Caco-2 (cell line): ENCODE measurements at regions of chr1 and their contacts with region 1.

Region 1: DNA sequence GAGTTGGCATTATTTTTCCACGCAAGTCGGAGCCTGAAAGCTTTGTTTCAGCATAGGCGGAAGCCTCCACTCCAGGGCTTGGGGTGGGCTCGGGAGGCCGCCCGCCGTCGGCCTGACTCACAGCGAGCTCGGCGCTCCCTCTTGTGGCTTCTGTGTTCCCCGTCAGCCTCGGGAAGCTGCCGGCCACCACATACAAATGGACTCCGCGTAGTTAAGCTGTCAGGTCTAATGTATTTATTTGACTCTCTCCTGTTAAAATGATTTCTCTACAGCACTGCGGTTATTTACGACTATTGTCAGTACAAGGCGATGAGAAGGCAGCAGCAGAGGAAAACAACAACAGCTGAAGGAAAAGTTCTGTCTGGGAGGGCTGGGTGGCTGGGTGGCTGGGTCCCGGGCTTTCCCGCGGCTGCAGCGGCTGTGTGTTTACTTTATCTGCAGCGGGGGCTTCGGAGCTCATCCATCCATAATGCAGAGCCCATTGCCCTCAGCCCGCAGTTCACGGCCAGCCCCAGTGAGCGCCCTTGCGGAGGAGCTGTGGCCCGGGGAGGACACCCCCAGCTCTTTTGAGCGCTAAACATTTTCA is 375.7 kb upstream of the CAMK1G start:
- DNase-seq: peak; percentile 59 to 66
- H3K4me3 ChIP-seq: peak overlapping the region; percentile 10; the same call in 1 of the 2 replicates
- H3K4me3 Mint-ChIP-seq: peak overlapping the region; percentile 62
- H3K27ac Mint-ChIP-seq: no peak overlapping the region
- H3K4me1 ChIP-seq: no peaks in the 10 kb centered on the region
- H3K4me1 Mint-ChIP-seq: no peaks in the 10 kb centered on the region
- H3K27me3 ChIP-seq: peaks cover 1% of the 10 kb centered on the region
- H3K27me3 Mint-ChIP-seq: peaks cover 14% of the 10 kb centered on the region
- CTCF ChIP-seq: peak; percentile 55 to 91

Region 2: GRCh38 chr1:209076688-209077087 is 131.1 kb before region 1 on chr1:
- CTCF ChIA-PET with region 1: interaction called, 7 read pairs
- POLR2A ChIA-PET with region 1: no interaction called
- intact Hi-C with region 1: loop called (anchors 1 kb)
- DNase-seq: peak in 1 of 2 experiments; percentile 12
- H3K4me3 ChIP-seq: no peak overlapping the region
- H3K4me3 Mint-ChIP-seq: no peak overlapping the region
- H3K27ac Mint-ChIP-seq: no peak overlapping the region
- H3K4me1 ChIP-seq: no peaks in the 10 kb centered on the region
- H3K4me1 Mint-ChIP-seq: peaks cover 9% of the 10 kb centered on the region
- H3K27me3 ChIP-seq: no peaks in the 10 kb centered on the region
- H3K27me3 Mint-ChIP-seq: no peaks in the 10 kb centered on the region
- CTCF ChIP-seq: peak; percentile 36

Region 3: GRCh38 chr1:209196140-209196539 is 11.7 kb before region 1 on chr1:
- CTCF ChIA-PET with region 1: no interaction called
- POLR2A ChIA-PET with region 1: no interaction called
- intact Hi-C with region 1: no loop called
- DNase-seq: no peak
- H3K4me3 ChIP-seq: no peak overlapping the region
- H3K4me3 Mint-ChIP-seq: no peak overlapping the region
- H3K27ac Mint-ChIP-seq: no peak overlapping the region
- H3K4me1 ChIP-seq: no peaks in the 10 kb centered on the region
- H3K4me1 Mint-ChIP-seq: no peaks in the 10 kb centered on the region
- H3K27me3 ChIP-seq: no peaks in the 10 kb centered on the region
- H3K27me3 Mint-ChIP-seq: no peaks in the 10 kb centered on the region
- CTCF ChIP-seq: no peak

Region 4: GRCh38 chr1:209435654-209436566 is 228.1 kb after region 1 on chr1:
- CTCF ChIA-PET with region 1: interaction called, 4 read pairs
- POLR2A ChIA-PET with region 1: no interaction called
- intact Hi-C with region 1: loop called (anchors 1 kb)
- DNase-seq: peak; percentile 85 to 91
- H3K4me3 ChIP-seq: no peak overlapping the region
- H3K4me3 Mint-ChIP-seq: no peak overlapping the region
- H3K27ac Mint-ChIP-seq: peak overlapping the region; percentile 0
- H3K4me1 ChIP-seq: peaks cover 45% of the 10 kb centered on the region
- H3K4me1 Mint-ChIP-seq: peaks cover 19% of the 10 kb centered on the region
- H3K27me3 ChIP-seq: no peaks in the 10 kb centered on the region
- H3K27me3 Mint-ChIP-seq: no peaks in the 10 kb centered on the region
- CTCF ChIP-seq: peak; percentile 84 to 94

Region 5: DNA sequence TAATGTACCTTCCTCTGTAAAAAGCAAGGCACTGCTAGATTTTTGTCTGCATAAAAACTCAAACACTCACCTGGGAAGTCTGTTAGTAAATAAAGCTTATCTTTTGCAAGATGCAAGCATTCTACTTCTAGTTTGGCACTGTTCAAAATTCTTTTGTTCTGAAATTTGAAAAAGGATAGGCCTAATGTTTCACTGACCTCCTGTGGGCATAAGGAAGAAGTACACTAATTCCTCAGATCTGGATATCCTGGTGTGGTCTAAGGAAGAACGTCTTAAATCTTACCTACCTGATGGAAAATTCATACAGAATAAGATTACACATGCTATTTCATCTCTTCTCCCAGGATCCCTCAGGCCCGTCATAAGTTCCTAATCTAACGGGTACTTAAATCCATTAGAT is 282.2 kb after region 1 on chr1:
- CTCF ChIA-PET with region 1: interaction called, 9 read pairs
- POLR2A ChIA-PET with region 1: no interaction called
- intact Hi-C with region 1: loop called (anchors 1 kb)
- DNase-seq: no peak
- H3K4me3 ChIP-seq: no peak overlapping the region
- H3K4me3 Mint-ChIP-seq: no peak overlapping the region
- H3K27ac Mint-ChIP-seq: no peak overlapping the region
- H3K4me1 ChIP-seq: no peaks in the 10 kb centered on the region
- H3K4me1 Mint-ChIP-seq: no peaks in the 10 kb centered on the region
- H3K27me3 ChIP-seq: no peaks in the 10 kb centered on the region
- H3K27me3 Mint-ChIP-seq: peaks cover 6% of the 10 kb centered on the region
- CTCF ChIP-seq: peak; percentile 46 to 60